A673 (cell line): ENCODE measurements at regions of chr10 and their contacts with region 1.

Region 1: GRCh38 chr10:86755740-86756510 is 494 bp upstream of the BMPR1A start:
- DNase-seq: peak; percentile 98
- H3K4me3 ChIP-seq: peak overlapping the region; percentile 93
- H3K27ac ChIP-seq: peak overlapping the region; percentile 97
- H3K4me1 ChIP-seq: peaks cover 45% of the 10 kb centered on the region
- H3K27me3 ChIP-seq: no peaks in the 10 kb centered on the region
- CTCF ChIP-seq: no peak

Region 2: GRCh38 chr10:86244297-86245014 is 511.5 kb before region 1 on chr10:
- CTCF ChIA-PET with region 1: no interaction called
- POLR2A ChIA-PET with region 1: no interaction called
- intact Hi-C with region 1: no loop called
- DNase-seq: peak; percentile 13
- H3K4me3 ChIP-seq: no peak overlapping the region
- H3K27ac ChIP-seq: no peak overlapping the region
- H3K4me1 ChIP-seq: peaks cover 4% of the 10 kb centered on the region
- H3K27me3 ChIP-seq: no peaks in the 10 kb centered on the region
- CTCF ChIP-seq: no peak

Region 3: DNA sequence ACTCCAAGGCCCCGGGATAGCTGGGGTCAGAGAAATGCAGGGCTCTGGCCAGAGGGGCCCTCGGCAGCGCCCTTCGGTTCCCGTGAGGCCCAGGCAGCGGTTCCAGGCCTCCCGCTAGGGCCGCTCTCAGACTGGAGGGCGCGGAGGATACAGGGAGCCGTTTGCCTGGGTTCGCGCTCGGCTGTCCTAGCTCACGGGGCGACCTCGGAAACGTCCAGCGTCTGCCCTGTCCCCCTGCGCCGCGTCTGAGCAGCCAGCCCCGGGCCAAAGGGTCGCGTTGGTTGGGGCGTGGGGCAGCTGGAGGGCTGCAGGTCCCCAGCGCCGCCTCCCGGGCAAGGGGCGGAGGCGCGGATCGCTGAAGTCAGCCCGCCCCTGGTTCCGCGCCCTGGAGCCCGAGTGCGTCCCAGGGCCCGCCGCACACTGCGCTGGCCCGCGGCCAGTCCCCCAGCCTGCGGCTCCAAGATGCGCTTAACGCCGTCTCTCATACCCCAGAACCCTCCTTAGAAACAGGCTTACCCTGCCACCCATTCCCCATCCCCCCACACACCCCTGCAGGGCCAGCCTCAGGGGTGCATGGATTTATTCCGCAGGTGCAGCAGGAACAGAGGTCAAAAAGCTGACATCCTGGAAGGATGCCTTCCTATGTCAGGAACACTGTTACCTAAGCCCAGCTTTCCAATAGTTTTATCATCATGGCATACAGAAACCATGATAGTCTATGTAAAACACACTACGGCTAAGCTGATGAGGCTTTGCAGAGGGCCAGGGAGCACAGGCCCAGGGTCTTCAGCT is 123.7 kb before region 1 on chr10:
- CTCF ChIA-PET with region 1: no interaction called
- POLR2A ChIA-PET with region 1: no interaction called
- intact Hi-C with region 1: no loop called
- DNase-seq: no peak
- H3K4me3 ChIP-seq: peak overlapping the region; percentile 25
- H3K27ac ChIP-seq: no peak overlapping the region
- H3K4me1 ChIP-seq: peaks cover 6% of the 10 kb centered on the region
- H3K27me3 ChIP-seq: peaks cover 10% of the 10 kb centered on the region
- CTCF ChIP-seq: 0 out of 2 replicates have a peak, but pooled peaks have one; percentile 11

Region 4: DNA sequence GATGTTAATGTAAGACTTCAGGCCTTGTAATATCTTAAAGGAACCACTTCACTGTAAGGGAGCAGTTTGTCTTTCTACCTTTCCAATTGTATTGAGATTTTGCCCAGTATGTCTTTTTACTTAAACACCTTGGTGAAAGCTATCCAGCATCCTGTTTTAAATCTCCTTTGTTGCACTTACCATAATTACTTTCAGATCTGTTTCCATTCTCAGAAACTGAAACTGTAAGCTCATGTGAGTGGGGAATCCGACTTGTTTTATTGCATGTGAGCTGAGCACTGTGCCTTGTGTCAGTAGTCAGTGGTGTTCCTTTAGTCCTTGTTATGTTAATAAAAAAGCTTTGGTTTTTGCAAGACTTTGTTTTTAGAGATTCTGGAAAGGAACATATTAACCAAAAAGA is 42.7 kb after region 1 on chr10:
- CTCF ChIA-PET with region 1: no interaction called
- POLR2A ChIA-PET with region 1: no interaction called
- intact Hi-C with region 1: loop called (anchors 2 kb)
- DNase-seq: peak; percentile 70
- H3K4me3 ChIP-seq: peak overlapping the region; percentile 23
- H3K27ac ChIP-seq: peak overlapping the region; percentile 77
- H3K4me1 ChIP-seq: peaks cover 91% of the 10 kb centered on the region
- H3K27me3 ChIP-seq: no peaks in the 10 kb centered on the region
- CTCF ChIP-seq: no peak

Region 5: GRCh38 chr10:86888585-86889381 is 132.9 kb after region 1 on chr10:
- CTCF ChIA-PET with region 1: no interaction called
- POLR2A ChIA-PET with region 1: interaction called, 10 read pairs
- intact Hi-C with region 1: loop called (anchors 5 kb)
- DNase-seq: peak; percentile 94
- H3K4me3 ChIP-seq: no peak overlapping the region
- H3K27ac ChIP-seq: peak overlapping the region; percentile 43
- H3K4me1 ChIP-seq: peaks cover 40% of the 10 kb centered on the region
- H3K27me3 ChIP-seq: no peaks in the 10 kb centered on the region
- CTCF ChIP-seq: no peak